ENCODE measurements at regions of chr3 and their contacts with region 1.

Region 1: DNA sequence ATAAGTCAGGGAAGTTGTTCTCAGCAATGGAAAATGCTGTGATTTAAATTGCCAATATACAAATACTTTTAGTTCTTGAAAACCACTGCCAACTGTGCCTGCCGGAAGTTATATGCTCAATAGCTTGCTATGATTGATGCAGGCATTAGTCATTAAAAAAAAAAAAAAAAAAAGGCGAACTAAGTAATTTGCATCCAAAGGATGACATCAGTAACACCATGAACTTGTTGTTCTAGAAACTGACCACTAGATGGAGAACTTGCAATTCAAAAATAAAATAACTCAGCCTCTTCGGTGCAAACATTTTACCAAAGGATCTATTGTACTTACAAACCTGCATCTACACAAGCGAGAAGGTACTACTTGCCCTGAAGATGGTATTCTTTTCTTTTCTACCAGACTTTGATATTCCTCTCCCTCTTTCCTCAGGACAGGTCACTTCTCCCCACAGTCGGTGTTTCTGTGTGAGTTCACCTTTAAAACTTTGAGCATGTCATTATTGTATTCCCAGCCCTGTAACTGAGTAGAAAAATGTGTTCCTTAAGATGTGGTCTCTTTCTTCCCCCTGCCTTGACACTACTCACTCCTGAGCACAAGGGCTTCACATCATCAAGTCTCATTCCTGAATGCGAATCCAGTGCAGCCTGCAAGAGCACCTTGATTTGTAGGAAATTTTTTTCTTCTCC is 115.0 kb upstream of the VEPH1 start:
- DNase-seq: no peak
- H3K4me3 Mint-ChIP-seq: no peak overlapping the region
- H3K27ac Mint-ChIP-seq: no peak overlapping the region
- H3K4me1 Mint-ChIP-seq: peaks cover 8% of the 10 kb centered on the region
- H3K27me3 Mint-ChIP-seq: peaks cover 15% of the 10 kb centered on the region

Region 2: DNA sequence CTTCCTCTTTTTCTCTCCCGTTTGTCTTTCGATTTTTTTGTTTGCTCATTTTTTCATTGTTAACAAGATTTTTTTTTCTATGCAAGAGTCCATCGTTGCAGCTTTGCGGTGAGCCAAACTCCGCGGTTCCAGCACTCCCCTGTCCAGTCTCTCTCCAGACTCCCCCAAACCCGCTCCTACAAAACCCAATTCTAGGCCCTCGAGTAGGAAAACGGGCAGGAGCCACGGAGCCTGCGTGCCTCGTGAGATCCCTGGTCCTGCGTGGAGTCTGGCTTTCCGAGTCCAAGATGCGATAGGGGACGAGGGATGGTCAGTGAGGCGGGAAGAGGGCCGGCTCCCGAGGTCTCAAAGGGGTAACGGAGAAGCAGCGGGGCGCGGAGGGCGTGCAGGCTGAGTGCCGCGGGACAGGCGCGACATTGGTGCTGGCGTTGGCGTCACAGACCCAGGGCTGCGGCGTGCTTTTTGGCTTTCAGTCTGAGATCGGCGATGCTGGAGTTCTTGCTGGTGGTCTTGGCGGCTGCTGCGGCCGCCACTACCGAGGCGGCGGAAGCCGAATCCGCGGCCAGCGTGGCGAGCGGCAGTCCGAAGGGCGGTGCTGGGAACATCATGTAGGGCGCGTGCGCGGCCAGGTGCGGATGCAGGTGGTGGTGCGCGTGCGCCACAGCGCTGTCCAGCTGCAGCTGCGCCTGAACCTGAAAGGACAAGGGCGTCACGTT is 479.5 kb after region 1 on chr3:
- intact Hi-C with region 1: loop called (anchors 5 kb)
- DNase-seq: peak; percentile 73
- H3K4me3 Mint-ChIP-seq: peak overlapping the region; percentile 89
- H3K27ac Mint-ChIP-seq: peak overlapping the region; percentile 84
- H3K4me1 Mint-ChIP-seq: peaks cover 18% of the 10 kb centered on the region
- H3K27me3 Mint-ChIP-seq: peaks cover 75% of the 10 kb centered on the region

Region 3: GRCh38 chr3:158313338-158313927 is 695.2 kb after region 1 on chr3:
- intact Hi-C with region 1: loop called (anchors 2 kb)
- DNase-seq: no peak
- H3K4me3 Mint-ChIP-seq: no peak overlapping the region
- H3K27ac Mint-ChIP-seq: no peak overlapping the region
- H3K4me1 Mint-ChIP-seq: no peaks in the 10 kb centered on the region
- H3K27me3 Mint-ChIP-seq: no peaks in the 10 kb centered on the region

Region 4: DNA sequence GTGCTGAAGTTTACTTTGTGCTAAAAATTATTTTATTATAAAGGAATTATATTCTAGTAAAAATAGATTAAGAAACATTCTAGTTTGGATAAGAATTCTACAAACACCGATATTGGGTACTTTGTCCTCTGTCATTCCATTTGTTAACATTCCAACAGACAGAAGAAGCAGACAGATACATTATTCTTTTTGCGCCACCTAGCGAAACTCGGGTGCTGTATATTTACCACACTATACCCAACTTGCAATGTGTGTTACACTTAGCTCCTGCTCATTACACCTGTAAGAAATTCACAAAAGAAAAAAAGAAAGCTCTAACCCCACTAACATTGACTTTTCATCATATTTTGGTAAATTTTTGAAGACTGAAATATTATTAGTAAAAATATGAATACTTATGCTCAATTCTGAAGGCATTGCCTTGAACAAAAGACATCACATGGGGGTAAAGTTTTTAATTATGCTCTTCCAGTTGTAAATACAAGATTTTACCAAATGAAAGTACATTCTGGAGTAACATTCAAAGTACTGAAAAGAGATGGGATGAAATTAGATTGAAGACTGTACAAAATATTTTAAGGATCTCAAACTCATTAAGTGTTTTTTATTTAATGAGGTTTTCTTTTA is 816.3 kb after region 1 on chr3:
- intact Hi-C with region 1: loop called (anchors 1 kb)
- DNase-seq: peak; percentile 6
- H3K4me3 Mint-ChIP-seq: no peak overlapping the region
- H3K27ac Mint-ChIP-seq: no peak overlapping the region
- H3K4me1 Mint-ChIP-seq: no peaks in the 10 kb centered on the region
- H3K27me3 Mint-ChIP-seq: no peaks in the 10 kb centered on the region

Region 5: DNA sequence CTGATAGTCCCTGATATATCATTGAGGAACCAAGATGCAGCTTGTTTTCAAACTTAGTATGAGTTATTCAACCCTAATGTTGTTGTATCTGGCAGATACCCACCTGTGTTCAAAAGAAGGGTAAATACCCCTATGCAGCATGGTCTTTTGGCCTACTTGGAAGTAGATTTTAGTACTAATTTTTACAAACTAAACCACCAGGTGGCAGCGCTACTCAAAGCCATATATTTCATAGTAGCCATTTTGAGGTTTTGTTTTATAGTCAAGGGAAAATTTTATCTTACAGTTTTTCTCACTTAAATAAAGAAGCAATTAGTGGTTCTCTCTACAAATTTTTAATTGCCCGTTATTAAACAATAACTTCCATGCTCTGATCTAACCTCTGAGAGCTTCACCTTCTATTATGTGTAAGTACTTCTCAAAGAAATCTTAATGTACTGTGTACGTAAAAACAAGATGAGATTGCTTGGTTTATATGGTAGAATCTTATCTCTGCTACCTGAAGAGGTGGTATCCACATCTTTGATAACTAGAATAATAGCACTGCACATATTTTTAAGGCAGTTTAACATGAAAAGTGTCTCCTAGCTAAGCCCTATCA is 921.3 kb after region 1 on chr3:
- intact Hi-C with region 1: loop called (anchors 5 kb)
- DNase-seq: peak; percentile 6
- H3K4me3 Mint-ChIP-seq: no peak overlapping the region
- H3K27ac Mint-ChIP-seq: no peak overlapping the region
- H3K4me1 Mint-ChIP-seq: no peaks in the 10 kb centered on the region
- H3K27me3 Mint-ChIP-seq: no peaks in the 10 kb centered on the region

Measured in activated T-helper 1 cell treated with anti-CD3 and anti-CD28 coated beads, Interleukin-12 subunit alpha, Interleukin-12 subunit beta, Interleukin-2, Interleukin-4 antibody, amounts not matched to agents 30 ng/mL and 10 ng/mL and 1 ng/mL, durations not matched to agents 14 hours and 24 hours and 36 hours (primary cell).